Ovary (tissue), 10 donors: ENCODE measurements at regions of chr6 and their contacts with region 1.

Region 1: GRCh38 chr6:30686908-30687658 is 638 bp upstream of the PPP1R18 start:
- DNase-seq: peak; percentile 91 to 93 (median 93)
- H3K4me3 ChIP-seq: peak overlapping the region; percentile 54
- H3K27ac ChIP-seq: peak overlapping the region; percentile 95 to 96
- H3K4me1 ChIP-seq: peaks cover 10% of the 10 kb centered on the region
- H3K27me3 ChIP-seq: no peaks in the 10 kb centered on the region
- CTCF ChIP-seq: no peak
- EP300 ChIP-seq: peak; percentile 35
- POLR2A ChIP-seq: peak; percentile 64

Region 2: DNA sequence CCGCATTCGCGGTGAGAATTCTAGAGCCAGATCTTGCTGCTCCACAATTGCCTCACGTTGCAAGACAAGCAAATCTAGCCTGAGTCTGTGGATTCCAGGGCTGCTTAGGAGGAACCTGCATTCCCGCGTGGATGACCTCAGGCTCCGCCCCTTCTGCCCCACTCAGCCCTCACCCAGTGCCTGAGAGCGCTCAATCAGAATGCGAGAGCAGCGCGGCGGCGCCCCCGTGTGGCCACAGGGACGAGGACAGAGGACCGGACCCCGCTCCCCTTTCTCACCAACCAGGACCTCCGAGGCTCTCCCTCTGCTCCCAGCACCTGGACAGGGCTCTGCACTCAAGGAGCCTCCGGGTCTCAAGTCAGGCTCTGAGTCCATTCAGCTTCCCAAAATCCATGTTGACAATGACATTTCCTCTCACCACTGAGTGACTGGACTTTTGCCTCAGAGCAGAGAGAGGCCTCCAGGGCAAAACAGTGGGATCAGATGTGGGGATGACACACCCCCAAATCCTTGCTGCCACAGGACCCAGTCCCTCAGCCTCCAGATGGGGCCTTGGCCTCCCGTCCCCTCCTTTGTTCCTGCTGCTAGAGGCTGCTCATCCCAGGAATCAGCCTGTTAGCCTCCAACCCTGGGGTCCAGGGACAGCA is 290.1 kb before region 1 on chr6:
- intact Hi-C with region 1: no loop called
- DNase-seq: peak; percentile 42 to 79 (median 59)
- H3K4me3 ChIP-seq: no peak overlapping the region
- H3K27ac ChIP-seq: no peak overlapping the region
- H3K4me1 ChIP-seq: no peaks in the 10 kb centered on the region
- H3K27me3 ChIP-seq: no peaks in the 10 kb centered on the region
- CTCF ChIP-seq: peak in 1 of 3 donors; percentile 22
- EP300 ChIP-seq: no peak
- POLR2A ChIP-seq: no peak

Region 3: GRCh38 chr6:30616811-30617564 is 70.1 kb before region 1 on chr6 and contains the start of gene PPP1R10:
- intact Hi-C with region 1: loop called in 1 of 4 experiments (anchors 5 kb)
- DNase-seq: peak; percentile 98 to 99 (median 99)
- H3K4me3 ChIP-seq: peak within 1 kb of the TSS; percentile 90
- H3K27ac ChIP-seq: peak within 1 kb of the TSS; percentile 95
- H3K4me1 ChIP-seq: peaks cover 1% of the 10 kb centered on the region
- H3K27me3 ChIP-seq: no peaks in the 10 kb centered on the region
- CTCF ChIP-seq: peak in 2 of 3 donors; percentile 10 to 17
- EP300 ChIP-seq: no peak
- POLR2A ChIP-seq: peak; percentile 100
- total RNA-seq, gene PPP1R10: 44.7 to 106 (median 76.0) TPM

Region 4: GRCh38 chr6:30719791-30720737 is 33.0 kb after region 1 on chr6 and contains the start of gene TUBB:
- intact Hi-C with region 1: loop called in 3 of 4 experiments (anchors 2 kb)
- DNase-seq: peak; percentile 94 to 97 (median 96)
- H3K4me3 ChIP-seq: peak within 1 kb of the TSS; percentile 89
- H3K27ac ChIP-seq: peak within 1 kb of the TSS; percentile 73 to 94
- H3K4me1 ChIP-seq: peaks cover 2% of the 10 kb centered on the region
- H3K27me3 ChIP-seq: no peaks in the 10 kb centered on the region
- CTCF ChIP-seq: peak in 1 of 3 donors; percentile 23
- EP300 ChIP-seq: no peak
- POLR2A ChIP-seq: peak; percentile 78
- total RNA-seq, gene TUBB: 242 to 697 (median 630) TPM

Region 5: DNA sequence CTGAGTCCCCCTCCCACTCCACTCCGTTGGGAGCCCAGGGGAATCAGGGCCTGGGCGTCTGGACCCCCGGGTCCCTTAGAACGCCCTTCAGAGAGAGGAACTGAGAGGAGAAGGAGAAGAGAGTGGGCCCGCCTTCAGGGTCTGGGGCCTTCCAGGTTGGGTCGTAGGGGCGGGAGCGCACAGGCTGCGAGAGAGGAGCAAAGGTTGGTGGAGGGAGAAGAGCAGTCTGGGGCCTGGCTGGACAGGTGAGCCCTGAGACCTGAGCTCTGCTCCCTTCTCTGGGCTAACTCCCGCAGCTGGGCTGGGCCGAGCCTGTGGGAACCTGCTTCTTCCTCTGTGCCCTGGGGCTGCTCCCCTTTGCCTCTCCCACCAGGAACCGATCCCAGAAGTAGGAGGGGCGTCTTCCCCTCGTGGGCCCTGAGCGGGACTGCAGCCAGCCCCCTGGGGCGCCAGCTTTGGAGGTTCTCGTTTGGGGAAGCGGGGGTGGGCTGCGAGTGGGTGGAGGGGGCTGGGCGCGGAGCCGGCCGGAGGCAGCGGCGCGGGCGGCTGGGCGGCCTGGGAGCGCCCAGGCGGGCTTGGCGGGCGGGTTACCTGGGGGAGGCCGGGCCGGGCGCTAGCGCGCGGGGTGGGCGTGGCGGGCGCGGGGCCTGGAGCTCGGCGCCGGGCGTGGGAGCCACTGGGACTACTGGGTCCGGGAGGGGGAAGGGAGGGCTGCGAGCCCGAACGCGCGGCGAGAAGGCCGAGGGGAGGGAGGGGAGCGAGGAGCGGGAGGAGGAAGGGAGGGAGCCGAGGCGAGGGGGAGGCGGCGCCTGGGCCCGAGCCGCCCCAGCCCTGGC is 196.8 kb after region 1 on chr6 and contains the start of gene DDR1:
- intact Hi-C with region 1: loop called in 2 of 4 experiments (anchors 10 kb)
- DNase-seq: peak; percentile 89 to 94 (median 92)
- H3K4me3 ChIP-seq: peak within 1 kb of the TSS; percentile 82
- H3K27ac ChIP-seq: peak within 1 kb of the TSS; percentile 87 to 97
- H3K4me1 ChIP-seq: peaks cover 16% of the 10 kb centered on the region
- H3K27me3 ChIP-seq: no peaks in the 10 kb centered on the region
- CTCF ChIP-seq: no peak
- EP300 ChIP-seq: no peak
- POLR2A ChIP-seq: peak; percentile 29
- total RNA-seq, gene DDR1: 20.1 to 116 (median 83.7) TPM

Region 6: GRCh38 chr6:31453259-31453658 is 766.2 kb after region 1 on chr6:
- intact Hi-C with region 1: no loop called
- DNase-seq: no peak
- H3K4me3 ChIP-seq: no peak overlapping the region
- H3K27ac ChIP-seq: no peak overlapping the region
- H3K4me1 ChIP-seq: no peaks in the 10 kb centered on the region
- H3K27me3 ChIP-seq: no peaks in the 10 kb centered on the region
- CTCF ChIP-seq: no peak
- EP300 ChIP-seq: no peak
- POLR2A ChIP-seq: no peak